Endothelial cell of umbilical vein (primary cell): ENCODE measurements at regions of chr10 and their contacts with region 1.

Region 1: DNA sequence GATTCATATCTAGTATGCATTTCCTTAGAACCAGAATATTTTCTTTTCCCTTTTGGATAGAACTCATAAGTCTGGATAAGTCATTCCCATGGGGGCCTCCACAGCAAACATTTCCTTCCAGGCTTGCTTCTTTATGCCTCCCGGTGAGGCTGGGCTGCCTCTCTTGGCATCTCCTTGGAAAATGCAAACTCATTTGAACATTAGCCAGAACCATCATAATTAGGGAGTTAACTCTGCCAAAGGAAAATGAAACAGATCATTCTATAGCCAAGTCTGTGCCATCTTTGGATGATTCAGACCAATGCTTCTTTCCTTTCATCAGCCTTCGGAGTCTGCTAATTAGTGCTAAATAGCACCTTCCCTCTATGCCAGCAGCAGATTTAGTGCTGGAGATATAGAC is 81.1 kb downstream of the PLPP4 start:
- DNase-seq: no peak
- H3K4me3 ChIP-seq: no peak overlapping the region
- H3K27ac ChIP-seq: no peak overlapping the region
- H3K4me1 ChIP-seq: peaks cover 5% of the 10 kb centered on the region
- H3K27me3 ChIP-seq: no peaks in the 10 kb centered on the region
- CTCF ChIP-seq: no peak
- POLR2A ChIP-seq: no peak

Region 2: GRCh38 chr10:119947300-119947699 is 590.8 kb before region 1 on chr10:
- CTCF ChIA-PET with region 1: no interaction called
- POLR2A ChIA-PET with region 1: no interaction called
- dilution Hi-C with region 1: no loop called
- intact Hi-C with region 1: no loop called
- DNase-seq: peak; percentile 5
- H3K4me3 ChIP-seq: no peak overlapping the region
- H3K27ac ChIP-seq: no peak overlapping the region
- H3K4me1 ChIP-seq: no peaks in the 10 kb centered on the region
- H3K27me3 ChIP-seq: no peaks in the 10 kb centered on the region
- CTCF ChIP-seq: no peak
- POLR2A ChIP-seq: no peak

Region 3: GRCh38 chr10:120426306-120426705 is 111.8 kb before region 1 on chr10:
- CTCF ChIA-PET with region 1: no interaction called
- POLR2A ChIA-PET with region 1: no interaction called
- dilution Hi-C with region 1: no loop called
- intact Hi-C with region 1: no loop called
- DNase-seq: peak; percentile 62
- H3K4me3 ChIP-seq: no peak overlapping the region
- H3K27ac ChIP-seq: peak overlapping the region; percentile 95
- H3K4me1 ChIP-seq: peaks cover 51% of the 10 kb centered on the region
- H3K27me3 ChIP-seq: no peaks in the 10 kb centered on the region
- CTCF ChIP-seq: no peak
- POLR2A ChIP-seq: no peak

Region 4: GRCh38 chr10:120548210-120548609 is 10.1 kb after region 1 on chr10:
- CTCF ChIA-PET with region 1: interaction called, 3 read pairs
- POLR2A ChIA-PET with region 1: no interaction called
- dilution Hi-C with region 1: no loop called
- intact Hi-C with region 1: loop called (anchors 2 kb)
- DNase-seq: no peak
- H3K4me3 ChIP-seq: no peak overlapping the region
- H3K27ac ChIP-seq: no peak overlapping the region
- H3K4me1 ChIP-seq: no peaks in the 10 kb centered on the region
- H3K27me3 ChIP-seq: no peaks in the 10 kb centered on the region
- CTCF ChIP-seq: no peak
- POLR2A ChIP-seq: no peak

Region 5: GRCh38 chr10:120969219-120969645 is 431.1 kb after region 1 on chr10:
- CTCF ChIA-PET with region 1: no interaction called
- POLR2A ChIA-PET with region 1: no interaction called
- dilution Hi-C with region 1: no loop called
- intact Hi-C with region 1: no loop called
- DNase-seq: no peak
- H3K4me3 ChIP-seq: no peak overlapping the region
- H3K27ac ChIP-seq: no peak overlapping the region
- H3K4me1 ChIP-seq: no peaks in the 10 kb centered on the region
- H3K27me3 ChIP-seq: no peaks in the 10 kb centered on the region
- CTCF ChIP-seq: no peak
- POLR2A ChIP-seq: no peak